Head of caudate nucleus (tissue), 42 donors: ENCODE measurements at regions of chr6 and their contacts with region 1.

Region 1: GRCh38 chr6:1596088-1596852 is 13.4 kb upstream of the FOXC1 start:
- DNase-seq: peak; percentile 54 to 88 (median 71)

Region 2: GRCh38 chr6:1890071-1890470 is 293.8 kb after region 1 on chr6:
- intact Hi-C with region 1: no loop called
- DNase-seq: no peak

Region 3: GRCh38 chr6:2634139-2634964 is 1038.1 kb after region 1 on chr6:
- intact Hi-C with region 1: loop called (anchors 5 kb)
- DNase-seq: peak; percentile 57 to 94 (median 86)

Region 4: GRCh38 chr6:2749969-2750600 is 1153.8 kb after region 1 on chr6:
- intact Hi-C with region 1: loop called (anchors 10 kb)
- DNase-seq: peak in 41 of 42 donors; percentile 48 to 93 (median 79)